ENCODE measurements at regions of chr9 and their contacts with region 1.

Region 1: DNA sequence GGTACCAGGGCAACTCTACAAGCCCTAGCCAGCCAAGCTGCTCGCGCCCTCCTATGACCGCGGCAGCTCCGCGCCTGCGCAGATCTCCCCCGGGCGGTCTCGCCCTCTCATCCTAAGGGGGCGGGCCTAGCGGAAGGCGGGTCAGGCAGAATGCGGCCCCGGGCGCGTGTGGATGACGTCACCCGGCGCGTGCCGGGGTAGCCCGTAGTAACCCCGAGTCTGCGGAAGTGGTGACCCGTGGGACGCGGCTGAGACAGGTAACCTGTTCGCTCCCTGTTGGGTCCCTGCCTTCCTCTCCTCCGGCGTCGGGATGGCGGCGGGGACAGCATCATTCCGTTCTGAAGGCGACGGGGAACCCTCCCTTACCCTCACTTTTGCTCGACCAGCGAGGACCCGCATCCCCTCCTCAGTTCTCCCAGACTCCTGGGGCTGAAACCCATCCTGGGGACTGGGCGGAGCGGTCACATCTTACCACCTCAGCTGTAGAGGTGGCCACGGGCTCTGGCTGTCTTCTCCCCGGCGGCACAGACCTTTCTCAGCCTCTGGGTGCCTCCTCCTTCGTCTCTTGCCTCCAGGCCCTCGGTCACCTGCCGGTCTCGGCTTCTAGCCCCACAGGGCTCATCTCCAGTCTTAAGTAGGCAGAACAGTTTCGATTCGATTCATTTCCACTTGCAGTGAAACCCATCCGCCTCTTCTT is at the start of gene AOPEP:
- DNase-seq: peak; percentile 98 to 100 (median 99)
- ATAC-seq: peak; percentile 95
- H3K4me3 ChIP-seq: peak within 1 kb of the TSS; percentile 88 to 92
- H3K4me3 Mint-ChIP-seq: peak within 1 kb of the TSS; percentile 99
- H3K27ac ChIP-seq: peak within 1 kb of the TSS; percentile 95 to 96
- H3K27ac Mint-ChIP-seq: peak within 1 kb of the TSS; percentile 98
- H3K4me1 ChIP-seq: peaks cover 6% of the 10 kb centered on the region
- H3K4me1 Mint-ChIP-seq: peaks cover 12% of the 10 kb centered on the region
- H3K27me3 ChIP-seq: no peaks in the 10 kb centered on the region
- H3K27me3 Mint-ChIP-seq: no peaks in the 10 kb centered on the region
- CTCF ChIP-seq: no peak
- total RNA-seq, gene AOPEP: 4.5 to 5.2 TPM

Region 2: DNA sequence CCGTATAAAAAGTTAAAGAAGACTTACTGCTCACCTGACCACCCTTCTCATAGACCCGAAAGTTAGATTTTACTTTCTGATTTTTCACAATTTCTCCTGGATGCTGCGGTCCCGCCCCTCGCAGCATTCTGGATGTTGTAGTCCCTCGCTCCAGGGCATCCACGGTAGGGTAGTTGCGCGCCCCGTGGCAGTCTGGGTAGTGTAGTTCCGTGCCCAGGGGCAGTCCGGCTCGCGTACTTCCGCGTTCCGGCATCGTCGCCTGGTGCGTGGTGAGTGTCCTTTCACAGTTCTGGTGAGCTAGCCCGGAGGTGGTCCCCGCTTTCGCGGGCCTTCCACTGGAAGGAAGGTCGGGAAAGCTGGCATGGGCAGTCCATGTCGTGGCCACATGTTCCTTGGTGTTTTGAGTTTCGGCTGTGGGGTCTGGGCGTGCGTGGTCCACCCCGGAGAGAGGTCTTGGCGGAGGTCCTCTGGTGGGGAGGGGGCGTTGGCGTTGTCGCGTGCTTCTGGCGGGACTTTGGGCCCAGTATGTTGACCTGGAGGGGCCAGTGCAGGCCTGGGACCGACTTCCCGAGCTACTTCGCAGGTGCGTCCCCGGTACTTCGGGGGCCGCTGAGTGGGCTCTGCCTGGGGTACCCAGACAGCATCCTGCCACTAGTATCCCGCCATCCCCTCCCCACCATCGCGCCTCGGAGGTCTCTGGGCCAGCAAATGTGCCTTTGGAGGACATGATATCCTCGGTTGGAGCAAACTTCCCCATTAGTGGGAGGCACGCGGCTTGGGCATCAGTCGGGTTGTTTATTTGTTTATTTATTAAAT is 467.4 kb before region 1 on chr9 and contains the start of gene ZNF169:
- CTCF ChIA-PET with region 1: no interaction called
- POLR2A ChIA-PET with region 1: no interaction called
- intact Hi-C with region 1: loop called in 1 of 2 experiments (anchors 5 kb)
- DNase-seq: peak; percentile 70 to 90 (median 85)
- ATAC-seq: peak; percentile 100
- H3K4me3 ChIP-seq: peak within 1 kb of the TSS; percentile 85 to 98
- H3K4me3 Mint-ChIP-seq: peak within 1 kb of the TSS; percentile 99
- H3K27ac ChIP-seq: peak within 1 kb of the TSS; percentile 54 to 75
- H3K27ac Mint-ChIP-seq: peak within 1 kb of the TSS; percentile 95
- H3K4me1 ChIP-seq: peaks cover 10% of the 10 kb centered on the region
- H3K4me1 Mint-ChIP-seq: peaks cover 38% of the 10 kb centered on the region
- H3K27me3 ChIP-seq: no peaks in the 10 kb centered on the region
- H3K27me3 Mint-ChIP-seq: peaks cover 5% of the 10 kb centered on the region
- CTCF ChIP-seq: no peak
- total RNA-seq, gene ZNF169: 3.3 to 6.4 TPM

Region 3: DNA sequence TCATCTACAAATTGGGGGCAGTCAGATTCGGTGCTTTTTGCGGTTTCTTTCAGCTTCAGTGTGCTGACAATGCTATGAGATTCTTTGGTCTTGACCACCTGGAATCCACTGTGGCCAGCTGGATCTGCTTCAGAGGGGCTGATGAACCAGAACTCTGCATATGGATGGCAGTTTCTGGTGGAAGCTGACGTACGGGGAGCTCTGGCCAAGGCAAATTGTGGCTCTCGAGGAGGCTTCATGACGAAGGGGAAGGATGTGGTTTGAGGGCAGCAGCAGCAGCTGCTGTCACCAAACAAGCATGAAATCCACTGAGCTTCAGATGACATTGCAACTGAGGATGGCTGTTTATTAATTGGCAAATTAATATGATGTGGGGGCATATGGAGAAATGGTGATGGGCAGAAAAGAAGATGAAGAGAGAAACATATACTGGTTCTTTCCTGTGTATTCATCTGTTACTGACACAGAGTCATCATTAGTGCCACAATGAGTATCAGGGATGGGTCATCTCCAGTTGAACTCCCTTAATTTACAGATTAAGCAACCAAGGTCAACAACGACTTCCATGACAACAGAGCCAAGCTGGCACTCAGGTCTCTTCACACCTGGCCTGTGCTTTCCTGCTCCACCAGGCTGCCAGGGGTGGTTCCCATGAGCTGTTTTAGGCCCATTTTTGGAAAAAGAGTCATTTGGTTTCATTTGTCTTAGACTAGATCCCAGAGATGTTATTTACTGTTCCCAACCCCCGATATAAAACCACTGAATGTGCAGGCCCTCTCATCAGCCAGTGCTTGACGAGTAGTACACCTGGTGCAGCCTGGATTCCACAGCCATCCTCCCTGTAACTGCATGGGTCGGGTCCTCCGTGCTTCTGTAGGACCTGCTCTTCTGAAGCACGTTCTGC is 134.6 kb after region 1 on chr9:
- CTCF ChIA-PET with region 1: no interaction called
- POLR2A ChIA-PET with region 1: no interaction called
- intact Hi-C with region 1: loop called in 1 of 2 experiments (anchors 5 kb)
- DNase-seq: peak; percentile 47 to 94 (median 70)
- ATAC-seq: peak; percentile 86
- H3K4me3 ChIP-seq: peak overlapping the region; percentile 5 to 31
- H3K4me3 Mint-ChIP-seq: peak overlapping the region; percentile 76
- H3K27ac ChIP-seq: peak overlapping the region; percentile 34 to 83
- H3K27ac Mint-ChIP-seq: peak overlapping the region; percentile 88
- H3K4me1 ChIP-seq: peaks cover 29% of the 10 kb centered on the region
- H3K4me1 Mint-ChIP-seq: peaks cover 46% of the 10 kb centered on the region
- H3K27me3 ChIP-seq: no peaks in the 10 kb centered on the region
- H3K27me3 Mint-ChIP-seq: no peaks in the 10 kb centered on the region
- CTCF ChIP-seq: no peak

Region 4: GRCh38 chr9:95317119-95317892 is 590.7 kb after region 1 on chr9 and contains the start of gene FANCC:
- CTCF ChIA-PET with region 1: no interaction called
- POLR2A ChIA-PET with region 1: no interaction called
- intact Hi-C with region 1: loop called (anchors 2 to 5 kb)
- DNase-seq: peak; percentile 71 to 93 (median 85)
- ATAC-seq: peak; percentile 79
- H3K4me3 ChIP-seq: peak within 1 kb of the TSS; percentile 87 to 99
- H3K4me3 Mint-ChIP-seq: peak within 1 kb of the TSS; percentile 94
- H3K27ac ChIP-seq: peak within 1 kb of the TSS; percentile 75 to 78
- H3K27ac Mint-ChIP-seq: peak within 1 kb of the TSS; percentile 91
- H3K4me1 ChIP-seq: peaks cover 12% of the 10 kb centered on the region
- H3K4me1 Mint-ChIP-seq: peaks cover 22% of the 10 kb centered on the region
- H3K27me3 ChIP-seq: no peaks in the 10 kb centered on the region
- H3K27me3 Mint-ChIP-seq: peaks cover 4% of the 10 kb centered on the region
- CTCF ChIP-seq: no peak
- total RNA-seq, gene FANCC: 4.2 to 6.1 TPM

Region 5: GRCh38 chr9:96566498-96567207 is 1840.0 kb after region 1 on chr9:
- CTCF ChIA-PET with region 1: no interaction called
- POLR2A ChIA-PET with region 1: no interaction called
- intact Hi-C with region 1: loop called in 1 of 2 experiments (anchors 2 kb)
- DNase-seq: peak; percentile 57 to 92 (median 82)
- ATAC-seq: peak; percentile 86
- H3K4me3 ChIP-seq: peak overlapping the region; percentile 76 to 88
- H3K4me3 Mint-ChIP-seq: peak overlapping the region; percentile 86
- H3K27ac ChIP-seq: peak overlapping the region; percentile 87 to 91
- H3K27ac Mint-ChIP-seq: peak overlapping the region; percentile 84
- H3K4me1 ChIP-seq: peaks cover 24% of the 10 kb centered on the region
- H3K4me1 Mint-ChIP-seq: peaks cover 27% of the 10 kb centered on the region
- H3K27me3 ChIP-seq: no peaks in the 10 kb centered on the region
- H3K27me3 Mint-ChIP-seq: peaks cover 12% of the 10 kb centered on the region
- CTCF ChIP-seq: peak; percentile 58